Body of pancreas (tissue), 4 donors: ENCODE measurements at regions of chr7 and their contacts with region 1.

Region 1: GRCh38 chr7:8442814-8443313 is 9.5 kb downstream of the NXPH1 start:
- DNase-seq: peak; percentile 65 to 83 (median 70)
- ATAC-seq: peak; percentile 92
- H3K4me3 ChIP-seq: no peak overlapping the region
- H3K27ac ChIP-seq: no peak overlapping the region
- H3K4me1 ChIP-seq: peaks cover 17% of the 10 kb centered on the region
- H3K27me3 ChIP-seq: peaks cover 0 to 35% of the 10 kb centered on the region in 2 donors
- CTCF ChIP-seq: no peak
- POLR2A ChIP-seq: no peak

Region 2: DNA sequence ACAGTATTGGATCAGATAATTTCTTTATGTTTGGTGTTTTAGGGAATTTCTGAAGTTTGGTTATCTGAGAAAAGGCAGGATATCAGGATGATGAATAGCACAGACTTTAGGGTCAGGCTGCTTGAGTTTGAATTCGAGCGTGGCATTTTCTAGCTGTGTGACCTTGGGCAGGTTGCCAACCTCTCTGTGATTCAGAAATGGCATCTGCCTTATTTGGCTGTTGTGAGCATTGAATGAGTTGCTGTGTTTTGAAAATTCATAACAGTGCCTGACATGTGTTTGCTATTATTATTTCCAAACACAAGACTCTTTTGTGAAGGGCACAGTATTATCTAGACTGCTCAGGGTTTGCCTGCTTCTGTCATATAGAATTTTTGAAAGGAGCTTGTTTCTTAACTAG is 57.4 kb after region 1 on chr7:
- intact Hi-C with region 1: loop called (anchors 10 kb)
- DNase-seq: peak in 3 of 4 donors; percentile 9 to 43 (median 38)
- ATAC-seq: no peak
- H3K4me3 ChIP-seq: no peak overlapping the region
- H3K27ac ChIP-seq: no peak overlapping the region
- H3K4me1 ChIP-seq: no peaks in the 10 kb centered on the region
- H3K27me3 ChIP-seq: no peaks in the 10 kb centered on the region
- CTCF ChIP-seq: no peak
- POLR2A ChIP-seq: no peak

Region 3: GRCh38 chr7:8724080-8724718 is 281.3 kb after region 1 on chr7:
- intact Hi-C with region 1: loop called (anchors 10 kb)
- DNase-seq: peak; percentile 46 to 75 (median 52)
- ATAC-seq: no peak
- H3K4me3 ChIP-seq: no peak overlapping the region
- H3K27ac ChIP-seq: no peak overlapping the region
- H3K4me1 ChIP-seq: no peaks in the 10 kb centered on the region
- H3K27me3 ChIP-seq: no peaks in the 10 kb centered on the region
- CTCF ChIP-seq: peak; percentile 37 to 65 (median 52)
- POLR2A ChIP-seq: no peak